ENCODE measurements at regions of chr6 and their contacts with region 1.

Region 1: DNA sequence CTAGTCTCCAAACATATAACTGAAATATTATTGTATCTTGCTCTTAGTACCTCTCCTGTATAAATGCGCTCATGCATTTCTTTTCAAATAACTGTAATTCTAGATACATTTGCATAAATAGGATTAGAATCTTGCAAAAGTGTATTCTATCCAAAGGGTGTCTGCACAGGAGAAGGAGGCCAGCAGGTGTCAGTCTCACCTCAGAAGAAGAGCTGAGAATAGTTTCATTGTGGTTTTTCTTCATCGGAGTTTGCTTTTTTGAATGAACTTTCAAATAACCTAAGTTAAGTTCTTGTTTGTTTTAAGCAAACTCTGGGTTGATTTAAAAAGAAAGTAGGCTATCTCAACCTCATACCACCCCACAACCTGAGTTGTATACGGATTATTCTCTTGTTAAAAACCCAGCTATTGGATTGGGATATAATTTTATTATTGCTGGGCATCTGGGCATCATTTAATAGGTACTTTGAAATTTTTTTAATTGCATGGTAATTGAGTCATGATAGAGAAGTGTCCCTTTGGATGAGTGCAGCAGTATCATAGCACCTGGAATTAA is 125.0 kb upstream of the MLIP start:
- DNase-seq: no peak
- ATAC-seq: peak; percentile 71
- H3K4me3 ChIP-seq: no peak overlapping the region
- H3K27ac ChIP-seq: no peak overlapping the region
- H3K4me1 ChIP-seq: no peaks in the 10 kb centered on the region
- H3K27me3 ChIP-seq: no peaks in the 10 kb centered on the region; a peak in 1 of 4 replicates
- CTCF ChIP-seq: peak; percentile 58 to 75 (median 61)
- EP300 ChIP-seq: no peak
- POLR2A ChIP-seq: no peak
- RAD21 ChIP-seq: peak; percentile 79

Region 2: GRCh38 chr6:53956068-53956711 is 30.1 kb before region 1 on chr6:
- CTCF ChIA-PET with region 1: no interaction called
- POLR2A ChIA-PET with region 1: no interaction called
- RAD21 ChIA-PET with region 1: no interaction called
- SMC1A ChIA-PET with region 1: no interaction called
- in situ Hi-C with region 1: no loop called
- intact Hi-C with region 1: no loop called
- DNase-seq: peak; percentile 8
- ATAC-seq: peak; percentile 94
- H3K4me3 ChIP-seq: no peak overlapping the region
- H3K27ac ChIP-seq: no peak overlapping the region
- H3K4me1 ChIP-seq: no peaks in the 10 kb centered on the region
- H3K27me3 ChIP-seq: no peaks in the 10 kb centered on the region; a peak in 1 of 4 replicates
- CTCF ChIP-seq: peak; percentile 36 to 58 (median 54); a peak in 5 of 6 replicates
- EP300 ChIP-seq: no peak
- POLR2A ChIP-seq: no peak
- RAD21 ChIP-seq: 0 out of 2 replicates have a peak, but pooled peaks have one; percentile 10

Region 3: DNA sequence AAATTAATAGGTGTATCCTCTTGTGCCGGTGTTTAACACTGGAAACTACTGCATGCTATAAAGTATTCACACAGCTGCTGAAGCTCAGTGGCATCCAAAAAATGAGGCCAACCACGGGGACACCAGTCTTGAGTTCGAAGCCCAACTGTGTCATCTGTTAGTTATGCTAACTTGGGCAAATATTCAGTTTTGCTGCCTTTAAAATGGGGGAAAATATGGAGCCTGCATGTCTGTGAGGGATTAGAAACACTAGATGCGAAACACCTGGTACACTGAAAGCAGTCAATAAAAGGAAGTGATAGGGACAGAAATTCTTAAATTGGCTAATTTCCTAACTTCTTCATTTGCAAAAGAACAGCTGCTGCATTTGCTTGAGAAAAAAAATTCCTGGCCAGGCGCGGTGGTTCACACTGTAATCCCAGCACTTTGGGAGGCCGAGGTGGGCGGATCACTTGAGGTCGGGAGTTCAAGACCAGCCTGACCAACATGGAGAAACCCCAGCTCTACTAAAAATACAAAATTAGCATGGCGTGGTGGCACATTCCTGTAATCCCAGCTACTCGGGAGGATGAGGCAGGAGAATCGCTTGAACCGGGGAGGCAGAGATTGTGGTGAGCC is 88.4 kb after region 1 on chr6:
- CTCF ChIA-PET with region 1: no interaction called
- POLR2A ChIA-PET with region 1: no interaction called
- RAD21 ChIA-PET with region 1: no interaction called
- SMC1A ChIA-PET with region 1: no interaction called
- in situ Hi-C with region 1: no loop called
- intact Hi-C with region 1: no loop called
- DNase-seq: no peak
- ATAC-seq: no peak
- H3K4me3 ChIP-seq: no peak overlapping the region
- H3K27ac ChIP-seq: no peak overlapping the region
- H3K4me1 ChIP-seq: no peaks in the 10 kb centered on the region
- H3K27me3 ChIP-seq: no peaks in the 10 kb centered on the region
- CTCF ChIP-seq: no peak
- EP300 ChIP-seq: no peak
- POLR2A ChIP-seq: no peak
- RAD21 ChIP-seq: no peak

Region 4: DNA sequence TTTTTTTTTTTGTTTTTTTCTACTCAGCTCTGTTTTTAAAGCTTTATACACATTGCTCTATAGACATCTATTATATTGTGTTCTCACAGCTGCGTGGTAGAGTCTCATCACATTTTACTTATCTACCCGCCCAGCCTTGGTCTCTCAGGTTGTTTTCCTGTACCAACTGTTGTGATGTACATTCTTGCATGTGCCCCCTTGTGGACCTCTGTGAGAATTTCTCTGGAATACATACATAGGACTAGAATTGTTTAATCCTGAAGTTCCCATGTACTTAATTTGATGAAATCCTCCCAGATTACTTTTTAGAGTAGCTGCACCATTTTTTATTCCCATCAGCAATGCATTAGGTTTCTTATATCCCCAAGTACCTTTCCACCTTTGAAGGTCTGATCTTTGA is 281.6 kb after region 1 on chr6:
- CTCF ChIA-PET with region 1: interaction called, 13 read pairs
- POLR2A ChIA-PET with region 1: no interaction called
- RAD21 ChIA-PET with region 1: interaction called, 5 read pairs
- SMC1A ChIA-PET with region 1: interaction called, 6 read pairs
- in situ Hi-C with region 1: loop called (anchors 10 kb)
- intact Hi-C with region 1: loop called (anchors 2 kb)
- DNase-seq: no peak
- ATAC-seq: peak; percentile 69
- H3K4me3 ChIP-seq: no peak overlapping the region
- H3K27ac ChIP-seq: no peak overlapping the region
- H3K4me1 ChIP-seq: no peaks in the 10 kb centered on the region
- H3K27me3 ChIP-seq: no peaks in the 10 kb centered on the region
- CTCF ChIP-seq: peak; percentile 29 to 38 (median 30); a peak in 4 of 6 replicates
- EP300 ChIP-seq: no peak
- POLR2A ChIP-seq: no peak
- RAD21 ChIP-seq: peak; percentile 38; the same call in 1 of the 2 replicates

Region 5: GRCh38 chr6:54681987-54682386 is 695.7 kb after region 1 on chr6:
- CTCF ChIA-PET with region 1: no interaction called
- POLR2A ChIA-PET with region 1: no interaction called
- RAD21 ChIA-PET with region 1: no interaction called
- SMC1A ChIA-PET with region 1: no interaction called
- in situ Hi-C with region 1: no loop called
- intact Hi-C with region 1: loop called (anchors 10 kb)
- DNase-seq: no peak
- ATAC-seq: peak; percentile 34
- H3K4me3 ChIP-seq: no peak overlapping the region
- H3K27ac ChIP-seq: no peak overlapping the region
- H3K4me1 ChIP-seq: no peaks in the 10 kb centered on the region
- H3K27me3 ChIP-seq: no peaks in the 10 kb centered on the region
- CTCF ChIP-seq: no peak
- EP300 ChIP-seq: no peak
- POLR2A ChIP-seq: no peak
- RAD21 ChIP-seq: no peak

Region 6: GRCh38 chr6:54992789-54993188 is 1006.5 kb after region 1 on chr6:
- CTCF ChIA-PET with region 1: interaction called, 3 read pairs
- POLR2A ChIA-PET with region 1: no interaction called
- RAD21 ChIA-PET with region 1: no interaction called
- SMC1A ChIA-PET with region 1: interaction called, 3 read pairs
- in situ Hi-C with region 1: no loop called
- intact Hi-C with region 1: loop called (anchors 5 kb)
- DNase-seq: no peak
- ATAC-seq: peak; percentile 80
- H3K4me3 ChIP-seq: no peak overlapping the region
- H3K27ac ChIP-seq: no peak overlapping the region
- H3K4me1 ChIP-seq: no peaks in the 10 kb centered on the region
- H3K27me3 ChIP-seq: no peaks in the 10 kb centered on the region
- CTCF ChIP-seq: peak; percentile 42 to 65 (median 51); a peak in 5 of 6 replicates
- EP300 ChIP-seq: no peak
- POLR2A ChIP-seq: no peak
- RAD21 ChIP-seq: peak; percentile 74

Region 7: GRCh38 chr6:55069132-55069781 is 1083.0 kb after region 1 on chr6:
- CTCF ChIA-PET with region 1: interaction called, 4 read pairs
- POLR2A ChIA-PET with region 1: no interaction called
- RAD21 ChIA-PET with region 1: interaction called, 4 read pairs
- SMC1A ChIA-PET with region 1: no interaction called
- in situ Hi-C with region 1: loop called (anchors 5 kb)
- intact Hi-C with region 1: loop called (anchors 1 kb)
- DNase-seq: no peak
- ATAC-seq: peak; percentile 58
- H3K4me3 ChIP-seq: no peak overlapping the region
- H3K27ac ChIP-seq: no peak overlapping the region
- H3K4me1 ChIP-seq: no peaks in the 10 kb centered on the region
- H3K27me3 ChIP-seq: no peaks in the 10 kb centered on the region
- CTCF ChIP-seq: peak; percentile 50 to 57 (median 54); a peak in 5 of 6 replicates
- EP300 ChIP-seq: no peak
- POLR2A ChIP-seq: no peak
- RAD21 ChIP-seq: peak; percentile 87

Region 8: GRCh38 chr6:55239099-55239498 is 1252.9 kb after region 1 on chr6:
- CTCF ChIA-PET with region 1: interaction called, 4 read pairs
- POLR2A ChIA-PET with region 1: no interaction called
- RAD21 ChIA-PET with region 1: interaction called, 3 read pairs
- SMC1A ChIA-PET with region 1: no interaction called
- in situ Hi-C with region 1: loop called (anchors 10 kb)
- intact Hi-C with region 1: loop called (anchors 5 kb)
- DNase-seq: no peak
- ATAC-seq: no peak
- H3K4me3 ChIP-seq: no peak overlapping the region
- H3K27ac ChIP-seq: no peak overlapping the region
- H3K4me1 ChIP-seq: no peaks in the 10 kb centered on the region
- H3K27me3 ChIP-seq: no peaks in the 10 kb centered on the region
- CTCF ChIP-seq: no peak
- EP300 ChIP-seq: no peak
- POLR2A ChIP-seq: no peak
- RAD21 ChIP-seq: no peak